MCF 10A (cell line): ENCODE measurements at regions of chr20 and their contacts with region 1.

Region 1: DNA sequence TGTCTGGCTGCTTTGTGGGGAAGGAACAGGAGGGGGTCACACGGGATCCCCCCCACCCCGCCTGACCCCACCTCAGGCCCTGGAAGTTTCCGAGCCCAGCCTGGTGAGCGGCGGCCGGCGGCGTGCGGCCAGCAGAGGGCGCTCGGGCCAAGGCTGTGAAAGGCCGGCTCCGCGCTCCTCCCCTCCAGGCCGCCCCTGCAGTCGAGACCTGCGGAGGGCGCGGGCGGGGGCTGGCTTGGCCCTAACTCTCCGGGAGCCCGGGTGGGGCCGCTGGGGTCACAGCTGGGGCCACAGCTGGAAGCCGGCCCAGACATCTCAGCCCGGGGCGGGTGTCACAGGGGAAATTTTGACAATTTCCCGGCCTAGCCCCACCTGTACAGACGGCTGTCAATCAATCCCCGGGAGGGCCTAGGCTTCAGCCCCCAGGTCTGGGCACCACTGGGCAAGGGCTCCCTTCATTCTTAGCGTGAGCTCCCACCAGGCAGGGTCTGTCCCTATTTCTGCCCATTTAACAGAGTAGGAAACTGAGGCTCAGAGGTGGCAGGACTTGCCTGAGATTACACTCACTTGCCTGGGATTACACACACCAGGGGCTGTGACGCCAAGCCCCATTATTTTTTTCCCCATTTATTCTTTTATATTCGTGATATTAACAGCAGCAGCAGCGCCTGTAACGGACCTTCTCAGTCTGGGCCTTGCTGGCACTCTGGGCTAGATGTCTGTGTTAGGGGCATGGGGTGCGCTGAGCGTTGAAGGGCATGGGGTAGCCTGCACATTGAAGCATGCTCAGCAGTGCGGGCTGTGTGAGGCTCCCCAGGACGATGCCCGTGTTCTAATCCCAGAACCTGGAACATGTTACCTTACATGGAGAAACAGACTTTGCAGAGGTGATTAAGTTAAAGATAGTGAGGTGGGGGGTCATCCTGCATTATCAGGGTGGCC is 23.0 kb downstream of the ZBP1 start:
- DNase-seq: peak; percentile 49
- H3K4me3 Mint-ChIP-seq: no peak overlapping the region
- H3K27ac Mint-ChIP-seq: no peak overlapping the region
- H3K4me1 Mint-ChIP-seq: peaks cover 5% of the 10 kb centered on the region
- H3K27me3 Mint-ChIP-seq: peaks cover 12% of the 10 kb centered on the region
- CTCF ChIP-seq: peak; percentile 85

Region 2: GRCh38 chr20:57498425-57499400 is 98.6 kb before region 1 on chr20:
- CTCF ChIA-PET with region 1: interaction called, 21 read pairs
- POLR2A ChIA-PET with region 1: no interaction called
- intact Hi-C with region 1: no loop called
- DNase-seq: peak; percentile 37
- H3K4me3 Mint-ChIP-seq: no peak overlapping the region
- H3K27ac Mint-ChIP-seq: no peak overlapping the region
- H3K4me1 Mint-ChIP-seq: no peaks in the 10 kb centered on the region
- H3K27me3 Mint-ChIP-seq: peaks cover 66% of the 10 kb centered on the region
- CTCF ChIP-seq: peak; percentile 20

Region 3: GRCh38 chr20:57522380-57522993 is 74.8 kb before region 1 on chr20:
- CTCF ChIA-PET with region 1: interaction called, 76 read pairs
- POLR2A ChIA-PET with region 1: interaction called, 3 read pairs
- intact Hi-C with region 1: no loop called
- DNase-seq: no peak
- H3K4me3 Mint-ChIP-seq: no peak overlapping the region
- H3K27ac Mint-ChIP-seq: no peak overlapping the region
- H3K4me1 Mint-ChIP-seq: no peaks in the 10 kb centered on the region
- H3K27me3 Mint-ChIP-seq: peaks cover 44% of the 10 kb centered on the region
- CTCF ChIP-seq: no peak

Region 4: DNA sequence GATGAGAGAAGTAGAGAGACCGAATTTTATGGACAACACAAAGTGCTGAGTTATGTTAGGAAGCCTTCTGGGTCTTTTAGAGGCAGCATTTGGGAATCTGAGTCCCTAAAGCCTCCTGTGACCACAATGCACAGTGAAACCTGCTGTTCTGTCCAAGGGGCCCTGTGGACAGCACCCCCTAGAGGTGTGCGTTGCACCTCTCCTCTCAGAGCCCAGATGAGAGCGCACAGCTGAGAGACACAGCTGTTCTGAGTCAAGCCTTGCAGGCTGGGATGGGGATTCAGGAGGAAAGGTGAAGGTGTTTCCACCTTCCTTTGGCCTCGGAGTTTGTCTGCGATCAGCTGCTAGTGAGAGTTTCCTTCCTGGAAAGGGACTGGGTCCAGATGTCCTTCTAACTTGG is 23.4 kb before region 1 on chr20:
- CTCF ChIA-PET with region 1: interaction called, 11 read pairs
- POLR2A ChIA-PET with region 1: no interaction called
- intact Hi-C with region 1: no loop called
- DNase-seq: no peak
- H3K4me3 Mint-ChIP-seq: no peak overlapping the region
- H3K27ac Mint-ChIP-seq: no peak overlapping the region
- H3K4me1 Mint-ChIP-seq: no peaks in the 10 kb centered on the region
- H3K27me3 Mint-ChIP-seq: peaks cover 43% of the 10 kb centered on the region
- CTCF ChIP-seq: no peak

Region 5: DNA sequence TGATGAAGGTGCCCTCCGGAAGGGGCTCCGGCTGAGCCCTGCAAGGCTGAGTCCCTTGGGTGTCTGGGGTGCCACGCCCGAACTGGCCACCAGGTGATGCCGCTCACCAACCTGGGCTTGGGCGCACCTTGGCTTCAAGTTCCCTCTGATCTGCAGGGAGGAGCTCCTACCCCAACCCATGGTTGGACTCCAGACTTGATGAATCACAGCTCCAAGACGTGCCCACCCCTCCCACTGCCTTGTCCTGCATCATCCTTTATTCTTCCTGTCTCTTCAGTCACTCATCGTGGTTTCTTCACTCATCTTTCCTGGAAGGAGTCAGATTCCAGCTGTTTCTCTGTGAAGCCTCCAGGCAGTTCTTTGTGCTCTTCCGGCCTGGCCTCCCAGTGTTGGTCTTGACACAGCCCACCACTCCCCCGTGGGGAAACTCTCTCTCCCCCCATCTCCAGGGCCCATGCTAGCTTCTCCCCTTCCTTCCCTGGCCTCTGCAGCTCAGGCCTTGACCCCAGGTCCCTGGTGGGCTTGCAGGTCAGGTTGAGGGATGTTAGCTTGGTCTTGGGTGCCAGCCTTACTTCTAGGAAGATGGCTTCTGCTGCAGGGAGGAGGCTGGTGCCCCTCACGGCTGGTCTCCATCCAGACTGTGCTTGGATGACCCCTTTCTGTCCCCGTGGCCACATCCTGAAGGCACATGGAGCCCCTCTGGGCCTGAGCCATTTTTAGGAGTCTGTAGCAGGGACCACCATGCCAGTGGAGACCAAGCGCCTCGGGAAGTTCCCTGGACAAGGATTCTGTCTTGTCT is 25.5 kb after region 1 on chr20:
- CTCF ChIA-PET with region 1: interaction called, 23 read pairs
- POLR2A ChIA-PET with region 1: no interaction called
- intact Hi-C with region 1: no loop called
- DNase-seq: peak; percentile 75
- H3K4me3 Mint-ChIP-seq: no peak overlapping the region
- H3K27ac Mint-ChIP-seq: no peak overlapping the region
- H3K4me1 Mint-ChIP-seq: peaks cover 6% of the 10 kb centered on the region
- H3K27me3 Mint-ChIP-seq: no peaks in the 10 kb centered on the region
- CTCF ChIP-seq: peak; percentile 84

Region 6: DNA sequence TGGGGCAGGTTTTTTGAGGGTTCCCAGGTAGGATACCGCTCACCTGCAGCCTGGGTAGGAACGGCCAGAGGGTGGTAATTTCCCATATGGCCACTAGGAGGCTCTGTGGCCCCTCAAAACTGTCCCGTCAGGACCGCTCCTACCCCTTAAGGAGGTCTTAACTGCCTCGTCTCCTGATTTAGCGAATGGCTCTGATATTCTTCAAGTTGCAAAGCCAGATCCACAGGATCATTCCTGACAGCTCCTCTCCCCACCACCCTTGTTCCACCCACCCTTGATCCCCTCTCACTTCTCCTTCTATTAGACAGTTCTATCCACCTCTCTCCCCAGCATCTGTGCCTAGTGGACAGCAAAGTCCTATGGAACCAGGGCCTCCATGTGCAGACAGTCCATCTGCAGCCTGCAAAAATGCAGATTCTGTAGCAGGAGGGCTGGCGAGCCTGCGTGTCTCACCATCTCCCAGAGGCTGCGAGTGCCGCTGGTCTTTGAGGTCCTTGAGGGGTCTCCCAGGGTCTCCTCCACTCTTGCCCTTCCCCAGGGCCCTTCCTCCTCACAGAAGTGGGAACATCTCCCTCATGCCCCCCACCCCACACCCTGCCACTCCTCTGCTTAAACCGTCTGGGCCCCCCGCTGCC is 57.2 kb after region 1 on chr20:
- CTCF ChIA-PET with region 1: interaction called, 11 read pairs
- POLR2A ChIA-PET with region 1: no interaction called
- intact Hi-C with region 1: no loop called
- DNase-seq: peak; percentile 56
- H3K4me3 Mint-ChIP-seq: no peak overlapping the region
- H3K27ac Mint-ChIP-seq: no peak overlapping the region
- H3K4me1 Mint-ChIP-seq: peaks cover 13% of the 10 kb centered on the region
- H3K27me3 Mint-ChIP-seq: no peaks in the 10 kb centered on the region
- CTCF ChIP-seq: peak; percentile 88

Region 7: GRCh38 chr20:58209652-58210397 is 612.6 kb after region 1 on chr20:
- CTCF ChIA-PET with region 1: interaction called, 435 read pairs
- POLR2A ChIA-PET with region 1: interaction called, 3 read pairs
- intact Hi-C with region 1: loop called (anchors 1 kb)
- DNase-seq: peak; percentile 65
- H3K4me3 Mint-ChIP-seq: no peak overlapping the region
- H3K27ac Mint-ChIP-seq: peak overlapping the region; percentile 76
- H3K4me1 Mint-ChIP-seq: no peaks in the 10 kb centered on the region
- H3K27me3 Mint-ChIP-seq: peaks cover 51% of the 10 kb centered on the region
- CTCF ChIP-seq: peak; percentile 100